MCF 10A (cell line): ENCODE measurements at regions of chr4 and their contacts with region 1.

Region 1: GRCh38 chr4:78704981-78705683 is 71.0 kb upstream of the BMP2K start:
- DNase-seq: peak; percentile 64
- H3K4me3 Mint-ChIP-seq: no peak overlapping the region
- H3K27ac Mint-ChIP-seq: no peak overlapping the region
- H3K4me1 Mint-ChIP-seq: peaks cover 7% of the 10 kb centered on the region
- H3K27me3 Mint-ChIP-seq: no peaks in the 10 kb centered on the region
- CTCF ChIP-seq: no peak

Region 2: DNA sequence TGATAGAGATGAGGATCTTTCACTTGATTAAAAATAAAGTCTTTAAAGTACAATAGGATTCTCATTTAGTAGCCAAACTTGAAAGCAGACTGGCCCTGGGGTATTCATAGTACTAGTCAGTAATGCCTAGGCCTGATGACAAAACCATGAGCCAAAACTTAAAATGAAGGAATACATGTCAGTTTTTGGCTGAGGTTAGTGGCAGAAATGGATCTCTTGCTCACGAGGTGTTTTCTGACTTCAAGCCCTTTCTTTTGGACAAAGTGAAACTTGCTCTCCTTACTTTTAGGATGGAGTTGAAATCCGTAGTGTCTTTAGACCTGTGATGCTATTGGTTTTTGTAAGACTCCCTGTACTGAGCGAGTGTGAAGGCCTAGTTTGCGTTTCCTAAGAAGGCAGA is 1390.4 kb before region 1 on chr4:
- CTCF ChIA-PET with region 1: no interaction called
- POLR2A ChIA-PET with region 1: no interaction called
- intact Hi-C with region 1: no loop called
- DNase-seq: no peak
- H3K4me3 Mint-ChIP-seq: no peak overlapping the region
- H3K27ac Mint-ChIP-seq: no peak overlapping the region
- H3K4me1 Mint-ChIP-seq: peaks cover 7% of the 10 kb centered on the region
- H3K27me3 Mint-ChIP-seq: no peaks in the 10 kb centered on the region
- CTCF ChIP-seq: no peak

Region 3: GRCh38 chr4:78386679-78387078 is 318.5 kb before region 1 on chr4:
- CTCF ChIA-PET with region 1: no interaction called
- POLR2A ChIA-PET with region 1: no interaction called
- intact Hi-C with region 1: no loop called
- DNase-seq: no peak
- H3K4me3 Mint-ChIP-seq: no peak overlapping the region
- H3K27ac Mint-ChIP-seq: no peak overlapping the region
- H3K4me1 Mint-ChIP-seq: no peaks in the 10 kb centered on the region
- H3K27me3 Mint-ChIP-seq: no peaks in the 10 kb centered on the region
- CTCF ChIP-seq: no peak

Region 4: DNA sequence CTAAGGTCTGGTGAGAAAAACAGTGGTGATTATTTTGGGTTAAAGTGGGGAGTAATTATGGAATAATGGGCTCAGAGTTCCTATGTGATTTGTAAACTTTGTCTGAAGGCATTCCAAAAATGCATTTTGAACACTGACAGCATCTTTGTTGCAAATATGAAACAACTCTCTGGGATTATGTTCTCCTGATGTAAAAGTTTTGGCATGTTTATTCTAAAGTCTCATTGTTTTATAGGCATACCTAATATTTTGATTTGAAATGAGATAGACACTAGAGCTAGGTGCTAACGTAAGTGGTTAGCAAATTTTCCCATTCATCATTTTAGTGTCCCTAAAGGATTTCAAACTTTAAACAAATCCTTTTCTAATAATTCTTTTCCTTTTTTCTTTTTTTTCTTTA is 294.5 kb before region 1 on chr4:
- CTCF ChIA-PET with region 1: no interaction called
- POLR2A ChIA-PET with region 1: no interaction called
- intact Hi-C with region 1: no loop called
- DNase-seq: no peak
- H3K4me3 Mint-ChIP-seq: no peak overlapping the region
- H3K27ac Mint-ChIP-seq: no peak overlapping the region
- H3K4me1 Mint-ChIP-seq: no peaks in the 10 kb centered on the region
- H3K27me3 Mint-ChIP-seq: no peaks in the 10 kb centered on the region
- CTCF ChIP-seq: no peak

Region 5: GRCh38 chr4:78693777-78694456 is 11.2 kb before region 1 on chr4:
- CTCF ChIA-PET with region 1: no interaction called
- POLR2A ChIA-PET with region 1: interaction called, 13 read pairs
- intact Hi-C with region 1: no loop called
- DNase-seq: peak; percentile 33
- H3K4me3 Mint-ChIP-seq: no peak overlapping the region
- H3K27ac Mint-ChIP-seq: no peak overlapping the region
- H3K4me1 Mint-ChIP-seq: peaks cover 12% of the 10 kb centered on the region
- H3K27me3 Mint-ChIP-seq: no peaks in the 10 kb centered on the region
- CTCF ChIP-seq: no peak

Region 6: GRCh38 chr4:79241846-79242245 is 536.7 kb after region 1 on chr4:
- CTCF ChIA-PET with region 1: no interaction called
- POLR2A ChIA-PET with region 1: no interaction called
- intact Hi-C with region 1: no loop called
- DNase-seq: peak; percentile 20
- H3K4me3 Mint-ChIP-seq: no peak overlapping the region
- H3K27ac Mint-ChIP-seq: no peak overlapping the region
- H3K4me1 Mint-ChIP-seq: no peaks in the 10 kb centered on the region
- H3K27me3 Mint-ChIP-seq: no peaks in the 10 kb centered on the region
- CTCF ChIP-seq: peak; percentile 10